ENCODE measurements at regions of chr20 and their contacts with region 1.

Region 1: DNA sequence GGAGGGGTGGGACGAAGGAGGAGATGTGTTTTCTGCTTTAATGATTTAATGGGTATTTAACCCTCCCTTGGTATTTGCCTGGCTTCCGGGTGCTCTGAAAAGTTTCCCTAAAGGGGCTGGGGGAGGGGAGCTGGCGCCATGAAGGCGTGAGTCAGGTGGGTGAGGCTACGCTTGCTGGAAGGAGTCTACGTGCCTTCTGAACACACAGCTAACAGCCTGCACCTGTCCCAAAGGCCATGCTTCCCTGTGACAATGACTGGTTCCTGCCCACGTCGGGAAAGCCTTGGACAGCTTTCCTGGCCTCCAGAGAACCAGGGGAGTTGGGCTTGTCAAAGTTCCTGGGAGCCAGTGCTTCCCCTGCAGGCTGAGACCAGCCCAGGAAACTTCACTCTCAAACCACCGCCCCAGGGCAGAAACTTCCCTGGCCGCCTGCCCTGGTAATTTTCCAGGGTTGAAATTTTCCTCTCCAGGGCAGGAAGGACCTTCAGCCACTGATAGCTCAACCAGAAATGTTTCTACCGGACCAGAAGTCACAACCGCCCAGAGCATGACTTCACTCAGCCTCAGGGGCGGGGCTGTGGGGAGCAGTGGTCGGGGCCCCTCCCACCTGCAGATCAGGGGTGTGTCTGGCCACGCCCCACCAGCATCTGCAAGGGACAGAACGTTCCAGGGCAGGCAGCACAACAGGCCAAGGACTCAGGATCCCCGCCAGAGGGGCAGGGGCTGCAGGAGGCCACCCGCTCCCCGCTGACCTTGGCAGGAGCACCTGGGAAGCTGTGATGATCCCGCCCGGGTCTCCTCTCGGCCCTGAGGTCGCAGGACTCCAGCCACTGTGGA is 18.6 kb upstream of the SLCO4A1 start:
- DNase-seq: peak; percentile 100
- H3K27ac ChIP-seq: peak overlapping the region; percentile 100
- CTCF ChIP-seq: no peak

Region 2: DNA sequence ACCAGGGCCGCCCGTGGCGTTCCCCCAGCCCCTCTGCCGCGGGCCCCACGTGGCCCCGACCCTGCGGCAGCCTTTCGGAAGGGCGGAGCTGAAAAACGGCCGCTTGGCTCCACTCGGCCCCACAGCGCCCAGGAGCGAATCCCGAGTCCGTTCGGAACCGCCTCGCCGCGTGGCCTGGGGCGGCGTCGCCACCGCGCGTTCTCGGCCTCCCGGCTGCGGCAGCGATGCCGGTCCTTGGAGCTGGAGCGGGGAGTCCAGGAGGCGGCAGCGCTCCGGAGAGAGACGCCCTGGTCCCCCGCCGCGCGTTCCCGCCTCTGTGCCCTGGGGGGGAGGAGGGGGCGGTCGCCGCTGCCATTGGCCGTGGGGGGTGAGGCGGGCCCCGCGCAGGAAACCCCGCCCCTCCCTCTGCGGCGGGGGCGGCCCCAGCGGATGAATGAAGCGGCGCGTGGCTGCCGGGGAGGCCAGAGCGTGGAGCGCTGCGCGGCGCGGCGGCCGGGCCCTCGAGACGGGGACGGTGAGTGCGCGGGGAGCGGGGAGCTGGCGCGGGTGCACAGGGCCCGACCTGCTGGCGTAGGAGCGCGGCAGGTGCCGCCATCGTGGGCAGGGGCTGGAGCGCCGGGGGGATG is 18.4 kb after region 1 on chr20 and contains the start of gene SLCO4A1:
- CTCF ChIA-PET with region 1: interaction called, 5 read pairs
- POLR2A ChIA-PET with region 1: interaction called, 13 read pairs
- DNase-seq: peak; percentile 94
- H3K27ac ChIP-seq: peak within 1 kb of the TSS; percentile 98
- CTCF ChIP-seq: no peak

Region 3: DNA sequence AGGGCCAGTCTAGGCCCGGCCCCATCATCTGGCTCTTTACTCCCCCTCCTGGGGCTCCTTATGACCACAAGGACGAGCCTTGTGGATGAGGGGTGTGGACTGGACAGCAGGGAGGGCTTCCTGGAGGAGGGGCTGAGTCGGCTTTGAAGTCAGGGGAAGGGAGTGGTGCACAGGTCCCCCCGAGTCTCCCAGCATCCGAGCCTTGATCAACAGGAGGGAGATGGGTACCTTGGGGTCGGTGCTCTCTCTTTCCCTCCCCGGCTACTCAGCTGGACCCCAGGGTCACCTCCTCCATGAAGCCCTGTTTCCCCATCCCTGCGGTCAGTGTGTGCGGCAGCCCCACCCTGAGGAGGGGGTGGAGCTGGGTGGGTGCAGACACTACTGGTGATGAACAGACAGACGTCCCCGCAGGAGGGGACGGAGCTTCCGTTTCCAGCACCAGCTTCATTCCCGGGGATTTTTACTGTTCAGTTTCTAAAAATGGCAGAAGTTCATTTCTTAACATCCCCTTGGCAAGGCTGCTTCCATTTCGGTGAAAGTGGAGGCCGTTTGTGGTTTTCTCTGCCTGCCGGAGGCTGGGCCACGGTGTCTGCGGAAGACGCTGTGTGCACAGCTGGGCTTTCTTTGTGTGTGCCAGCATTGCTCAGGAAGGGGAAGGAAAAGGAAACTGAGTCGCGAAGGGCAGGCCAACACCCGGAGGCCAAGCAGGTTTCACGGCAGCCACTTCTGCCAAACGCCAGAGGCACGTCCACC is 104.5 kb after region 1 on chr20:
- CTCF ChIA-PET with region 1: no interaction called
- POLR2A ChIA-PET with region 1: no interaction called
- DNase-seq: no peak
- H3K27ac ChIP-seq: peak overlapping the region; percentile 3; the same call in 1 of the 2 replicates
- CTCF ChIP-seq: no peak